ENCODE measurements at regions of chr20 and their contacts with region 1.

Region 1: GRCh38 chr20:63782051-63782471 is 42.5 kb downstream of the SLC2A4RG start:
- DNase-seq: peak in 8 of 9 experiments; percentile 11 to 93 (median 76)
- ATAC-seq: peak; percentile 94
- H3K4me3 ChIP-seq: no peak overlapping the region
- H3K4me3 Mint-ChIP-seq: peak overlapping the region; percentile 39
- H3K27ac ChIP-seq: peak overlapping the region in 1 of 2 experiments; percentile 50
- H3K27ac Mint-ChIP-seq: peak overlapping the region; percentile 81
- H3K4me1 ChIP-seq: peaks cover 12% of the 10 kb centered on the region
- H3K4me1 Mint-ChIP-seq: peaks cover 18% of the 10 kb centered on the region
- H3K27me3 ChIP-seq: no peaks in the 10 kb centered on the region
- H3K27me3 Mint-ChIP-seq: no peaks in the 10 kb centered on the region
- CTCF ChIP-seq: peak; percentile 23

Region 2: DNA sequence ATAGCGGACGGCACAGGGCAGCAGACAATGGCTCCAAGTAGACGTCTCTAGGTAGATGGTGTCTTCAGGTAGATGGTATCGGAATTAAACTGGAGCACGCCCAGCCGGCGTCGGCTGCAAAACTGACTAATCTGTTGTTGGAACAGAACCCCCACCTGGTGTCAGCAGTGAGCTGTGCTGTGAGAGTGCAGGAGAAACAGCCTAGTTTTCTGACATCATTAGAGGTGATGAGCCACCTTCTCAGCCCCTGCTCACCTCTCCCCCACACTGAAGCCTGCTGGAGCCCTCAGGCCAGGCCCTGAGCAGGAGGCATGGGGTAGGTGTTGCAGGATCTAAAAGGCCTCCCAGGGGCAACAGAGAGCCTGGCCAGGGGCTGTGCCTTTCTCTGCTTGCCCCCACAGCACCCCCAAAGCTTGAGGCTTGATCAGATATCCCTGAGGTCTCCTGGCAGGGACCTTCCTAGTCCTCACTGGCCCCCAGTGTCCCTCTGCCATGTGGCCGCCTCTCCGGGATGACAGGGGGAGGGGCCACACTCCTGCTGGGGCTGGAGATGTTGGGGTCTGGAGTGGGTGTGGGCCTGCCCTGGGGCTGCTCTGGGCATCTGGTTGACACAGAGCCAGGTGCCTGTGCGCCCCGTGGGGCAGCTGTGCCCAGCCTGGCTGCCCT is 201.1 kb before region 1 on chr20:
- CTCF ChIA-PET with region 1: no interaction called
- POLR2A ChIA-PET with region 1: no interaction called
- intact Hi-C with region 1: loop called (anchors 2 to 5 kb)
- DNase-seq: peak; percentile 58 to 84 (median 77)
- ATAC-seq: peak; percentile 99
- H3K4me3 ChIP-seq: no peak overlapping the region
- H3K4me3 Mint-ChIP-seq: no peak overlapping the region
- H3K27ac ChIP-seq: no peak overlapping the region
- H3K27ac Mint-ChIP-seq: no peak overlapping the region
- H3K4me1 ChIP-seq: peaks cover 5% of the 10 kb centered on the region
- H3K4me1 Mint-ChIP-seq: peaks cover 3% of the 10 kb centered on the region
- H3K27me3 ChIP-seq: no peaks in the 10 kb centered on the region
- H3K27me3 Mint-ChIP-seq: no peaks in the 10 kb centered on the region
- CTCF ChIP-seq: peak; percentile 64

Region 3: DNA sequence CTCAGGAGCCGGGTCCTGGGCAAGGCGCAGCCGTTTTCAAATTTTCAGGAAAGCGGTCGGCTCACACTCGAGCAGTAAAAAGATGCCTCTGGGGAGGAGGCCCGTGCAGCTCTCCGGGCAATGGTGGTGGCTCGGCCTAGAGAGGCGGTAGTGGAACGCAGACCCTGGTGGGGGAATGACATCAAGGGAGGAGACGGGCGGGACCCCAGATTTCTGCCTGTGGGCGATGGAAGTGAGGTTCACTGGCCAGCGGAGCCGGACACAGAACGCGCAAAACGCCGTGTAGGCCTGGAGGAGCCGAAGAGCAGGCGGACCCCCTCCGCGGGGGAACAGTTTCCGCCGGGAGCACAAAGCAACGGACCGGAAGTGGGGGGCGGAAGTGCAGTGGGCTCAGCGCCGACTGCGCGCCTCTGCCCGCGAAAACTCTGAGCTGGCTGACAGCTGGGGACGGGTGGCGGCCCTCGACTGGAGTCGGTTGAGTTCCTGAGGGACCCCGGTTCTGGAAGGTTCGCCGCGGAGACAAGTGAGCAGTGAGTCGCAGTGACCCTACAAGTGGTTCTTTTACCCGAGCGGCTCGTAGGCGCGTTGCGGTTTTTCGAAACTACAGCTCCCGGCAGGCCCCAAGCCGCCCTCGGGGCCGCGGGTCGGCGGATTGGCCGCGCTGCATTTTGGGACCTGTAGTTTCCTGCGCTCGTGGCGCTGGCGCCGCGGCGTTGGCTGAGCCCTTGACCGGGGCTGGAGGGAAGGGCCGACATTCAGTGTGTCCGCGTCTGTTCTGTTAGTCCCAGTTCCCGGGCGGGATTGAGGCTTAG is 123.9 kb before region 1 on chr20 and contains the start of gene RTEL1:
- CTCF ChIA-PET with region 1: no interaction called
- POLR2A ChIA-PET with region 1: no interaction called
- intact Hi-C with region 1: no loop called
- DNase-seq: peak; percentile 81 to 97 (median 88)
- ATAC-seq: peak; percentile 83
- H3K4me3 ChIP-seq: peak within 1 kb of the TSS; percentile 76 to 97
- H3K4me3 Mint-ChIP-seq: peak within 1 kb of the TSS; percentile 93
- H3K27ac ChIP-seq: peak within 1 kb of the TSS; percentile 72 to 75
- H3K27ac Mint-ChIP-seq: peak within 1 kb of the TSS; percentile 91
- H3K4me1 ChIP-seq: peaks cover 35% of the 10 kb centered on the region
- H3K4me1 Mint-ChIP-seq: peaks cover 36% of the 10 kb centered on the region
- H3K27me3 ChIP-seq: no peaks in the 10 kb centered on the region
- H3K27me3 Mint-ChIP-seq: no peaks in the 10 kb centered on the region
- CTCF ChIP-seq: no peak
- total RNA-seq, gene RTEL1: 21.4 to 24.9 TPM

Region 4: DNA sequence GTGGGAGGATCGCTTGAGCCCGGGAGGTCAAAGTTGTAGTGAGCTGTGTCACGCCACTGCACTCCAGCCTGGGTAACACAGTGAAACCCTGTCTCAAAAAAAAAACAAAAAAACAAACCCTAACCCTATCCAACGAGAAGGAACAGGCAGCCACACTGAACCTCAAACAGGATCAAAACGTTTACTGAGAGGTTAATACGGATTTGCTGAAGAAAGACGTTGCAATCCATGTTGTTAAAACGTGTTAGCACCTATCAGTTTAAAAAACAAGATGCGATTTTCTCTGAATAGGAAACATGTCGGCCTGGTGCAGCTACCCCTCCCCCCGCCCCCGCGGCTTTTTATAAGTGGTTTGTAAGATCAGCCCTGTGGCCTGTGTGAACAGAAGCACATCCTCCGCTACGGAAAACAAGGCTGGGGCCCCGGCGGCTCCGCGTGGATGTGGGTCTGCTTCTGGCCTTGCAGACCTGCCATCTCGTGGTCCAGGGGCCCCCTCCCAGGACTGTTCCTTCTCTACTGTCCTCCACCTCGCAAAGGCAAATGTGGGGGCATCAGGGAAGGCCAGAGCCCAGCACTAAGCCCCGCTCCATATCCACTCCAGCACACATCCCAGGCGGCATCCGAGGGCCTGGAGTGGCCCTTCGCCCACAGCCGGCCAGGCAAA is 31.1 kb before region 1 on chr20:
- CTCF ChIA-PET with region 1: interaction called, 4 read pairs
- POLR2A ChIA-PET with region 1: interaction called, 4 read pairs
- intact Hi-C with region 1: loop called in 1 of 2 experiments (anchors 2 kb)
- DNase-seq: peak in 8 of 9 experiments; percentile 57 to 87 (median 72)
- ATAC-seq: peak; percentile 86
- H3K4me3 ChIP-seq: peak overlapping the region; percentile 2 to 44
- H3K4me3 Mint-ChIP-seq: peak overlapping the region; percentile 77
- H3K27ac ChIP-seq: peak overlapping the region; percentile 23 to 52
- H3K27ac Mint-ChIP-seq: peak overlapping the region; percentile 91
- H3K4me1 ChIP-seq: peaks cover 27% of the 10 kb centered on the region
- H3K4me1 Mint-ChIP-seq: peaks cover 29% of the 10 kb centered on the region
- H3K27me3 ChIP-seq: no peaks in the 10 kb centered on the region
- H3K27me3 Mint-ChIP-seq: no peaks in the 10 kb centered on the region
- CTCF ChIP-seq: no peak

Measured in CD8-positive, alpha-beta T cell (primary cell).